ENCODE measurements at regions of chr16 and their contacts with region 1.

Region 1: GRCh38 chr16:46973207-46973995 is at the start of gene DNAJA2:
- DNase-seq: peak; percentile 96
- ATAC-seq: peak; percentile 87
- H3K4me3 Mint-ChIP-seq: peak within 1 kb of the TSS; percentile 85
- H3K27ac Mint-ChIP-seq: peak within 1 kb of the TSS; percentile 99
- H3K4me1 Mint-ChIP-seq: peaks cover 56% of the 10 kb centered on the region
- H3K27me3 Mint-ChIP-seq: no peaks in the 10 kb centered on the region
- total RNA-seq, gene DNAJA2: 57.2 to 71.2 TPM

Region 2: DNA sequence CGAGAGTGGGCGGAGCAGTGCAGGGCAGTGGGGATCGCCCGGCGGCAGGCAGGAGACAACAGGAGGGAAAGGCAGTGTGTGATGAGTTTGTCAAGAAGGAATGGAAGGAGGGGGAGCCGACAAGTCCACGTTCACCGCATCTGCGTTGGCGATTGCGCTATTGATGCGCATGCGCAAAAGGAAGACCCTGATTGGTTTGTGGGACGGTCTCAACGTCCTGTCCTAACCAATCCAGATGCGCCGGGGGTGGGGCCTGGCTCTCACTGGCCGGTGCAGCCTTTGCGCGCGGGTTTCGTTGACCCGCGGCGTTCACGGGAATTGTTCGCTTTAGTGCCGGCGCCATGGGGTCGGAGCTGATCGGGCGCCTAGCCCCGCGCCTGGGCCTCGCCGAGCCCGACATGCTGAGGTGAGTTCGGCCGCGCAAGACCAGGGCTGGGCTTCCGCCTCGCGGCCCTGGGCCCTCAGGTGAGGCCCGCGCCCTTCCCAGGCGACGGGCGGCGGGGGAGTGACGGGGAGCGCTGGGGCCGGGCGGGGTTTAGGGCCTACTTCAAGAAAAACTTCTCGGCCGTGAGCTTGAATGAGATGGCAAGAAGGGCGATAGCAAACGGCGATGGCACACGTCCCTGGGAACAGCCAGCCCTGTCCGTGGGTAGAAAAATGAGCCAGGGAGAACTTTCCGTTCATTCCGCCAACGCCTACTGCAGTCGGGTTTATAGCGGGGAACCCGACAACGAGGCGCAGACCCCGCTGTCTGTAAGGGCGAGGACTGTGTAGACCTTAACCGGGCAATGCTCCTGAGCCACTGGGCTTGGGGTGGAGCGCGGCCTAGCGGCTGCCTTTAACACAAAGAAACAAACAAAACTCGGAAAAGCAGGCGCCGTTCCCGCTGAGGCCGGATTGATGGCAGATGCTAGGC is 283.8 kb before region 1 on chr16 and contains the start of gene ORC6:
- CTCF ChIA-PET with region 1: no interaction called
- POLR2A ChIA-PET with region 1: no interaction called
- intact Hi-C with region 1: loop called (anchors 1 kb)
- DNase-seq: peak; percentile 99
- ATAC-seq: peak; percentile 83
- H3K4me3 Mint-ChIP-seq: no peak within 1 kb of the TSS
- H3K27ac Mint-ChIP-seq: no peak within 1 kb of the TSS
- H3K4me1 Mint-ChIP-seq: peaks cover 43% of the 10 kb centered on the region
- H3K27me3 Mint-ChIP-seq: no peaks in the 10 kb centered on the region
- total RNA-seq, gene ORC6: 30.3 to 43.4 TPM

Region 3: GRCh38 chr16:46883690-46884512 is 89.5 kb before region 1 on chr16 and contains the start of gene GPT2:
- CTCF ChIA-PET with region 1: interaction called, 3 read pairs
- POLR2A ChIA-PET with region 1: no interaction called
- intact Hi-C with region 1: loop called in 1 of 2 experiments (anchors 1 kb)
- DNase-seq: peak; percentile 91
- ATAC-seq: peak; percentile 96
- H3K4me3 Mint-ChIP-seq: peak within 1 kb of the TSS; percentile 80
- H3K27ac Mint-ChIP-seq: peak within 1 kb of the TSS; percentile 94
- H3K4me1 Mint-ChIP-seq: peaks cover 10% of the 10 kb centered on the region
- H3K27me3 Mint-ChIP-seq: peaks cover 24% of the 10 kb centered on the region
- total RNA-seq, gene GPT2: 25.6 to 34.9 TPM

Region 4: DNA sequence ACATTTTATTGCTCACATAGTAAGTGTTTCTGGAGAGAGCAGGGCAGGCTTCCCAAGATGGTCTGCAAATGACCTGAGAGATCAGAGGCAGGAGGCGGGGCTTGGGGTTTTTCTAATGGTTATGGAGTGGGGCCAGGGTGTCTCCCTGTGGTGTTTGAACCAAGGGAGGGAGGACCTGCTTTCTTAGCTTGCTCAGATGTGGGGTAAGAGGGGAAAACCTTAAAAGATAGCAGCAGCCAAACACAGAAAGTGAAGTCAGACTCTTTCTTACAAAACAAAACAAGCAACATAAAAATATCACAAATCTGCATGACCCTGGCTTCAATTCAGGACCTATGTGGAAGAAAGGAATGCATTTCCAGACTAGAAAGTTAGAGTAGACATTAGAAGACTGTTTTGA is 23.0 kb after region 1 on chr16:
- CTCF ChIA-PET with region 1: no interaction called
- POLR2A ChIA-PET with region 1: no interaction called
- intact Hi-C with region 1: no loop called
- DNase-seq: peak; percentile 25
- ATAC-seq: no peak
- H3K4me3 Mint-ChIP-seq: no peak overlapping the region
- H3K27ac Mint-ChIP-seq: no peak overlapping the region
- H3K4me1 Mint-ChIP-seq: no peaks in the 10 kb centered on the region
- H3K27me3 Mint-ChIP-seq: no peaks in the 10 kb centered on the region

Region 5: GRCh38 chr16:47018223-47018891 is 45.0 kb after region 1 on chr16:
- CTCF ChIA-PET with region 1: interaction called, 7 read pairs
- POLR2A ChIA-PET with region 1: no interaction called
- intact Hi-C with region 1: loop called (anchors 1 to 2 kb)
- DNase-seq: peak; percentile 76
- ATAC-seq: peak; percentile 95
- H3K4me3 Mint-ChIP-seq: no peak overlapping the region
- H3K27ac Mint-ChIP-seq: peak overlapping the region; percentile 60
- H3K4me1 Mint-ChIP-seq: peaks cover 18% of the 10 kb centered on the region
- H3K27me3 Mint-ChIP-seq: no peaks in the 10 kb centered on the region

Region 6: GRCh38 chr16:47460711-47461597 is 487.6 kb after region 1 on chr16 and contains the starts of genes ITFG1 and PHKB:
- CTCF ChIA-PET with region 1: no interaction called
- POLR2A ChIA-PET with region 1: no interaction called
- intact Hi-C with region 1: loop called in 1 of 2 experiments (anchors 1 kb)
- DNase-seq: peak; percentile 97
- ATAC-seq: peak; percentile 95
- H3K4me3 Mint-ChIP-seq: peak within 1 kb of the TSS; percentile 97
- H3K27ac Mint-ChIP-seq: peak within 1 kb of the TSS; percentile 97
- H3K4me1 Mint-ChIP-seq: peaks cover 58% of the 10 kb centered on the region
- H3K27me3 Mint-ChIP-seq: no peaks in the 10 kb centered on the region
- total RNA-seq, gene ITFG1: 18.9 to 27.0 TPM
- total RNA-seq, gene PHKB: 12.6 to 12.8 TPM

Measured in activated CD4-positive, alpha-beta T cell treated with anti-CD3 and anti-CD28 coated beads for 36 hours (primary cell).